ENCODE measurements at regions of chr1 and their contacts with region 1.

Region 1: DNA sequence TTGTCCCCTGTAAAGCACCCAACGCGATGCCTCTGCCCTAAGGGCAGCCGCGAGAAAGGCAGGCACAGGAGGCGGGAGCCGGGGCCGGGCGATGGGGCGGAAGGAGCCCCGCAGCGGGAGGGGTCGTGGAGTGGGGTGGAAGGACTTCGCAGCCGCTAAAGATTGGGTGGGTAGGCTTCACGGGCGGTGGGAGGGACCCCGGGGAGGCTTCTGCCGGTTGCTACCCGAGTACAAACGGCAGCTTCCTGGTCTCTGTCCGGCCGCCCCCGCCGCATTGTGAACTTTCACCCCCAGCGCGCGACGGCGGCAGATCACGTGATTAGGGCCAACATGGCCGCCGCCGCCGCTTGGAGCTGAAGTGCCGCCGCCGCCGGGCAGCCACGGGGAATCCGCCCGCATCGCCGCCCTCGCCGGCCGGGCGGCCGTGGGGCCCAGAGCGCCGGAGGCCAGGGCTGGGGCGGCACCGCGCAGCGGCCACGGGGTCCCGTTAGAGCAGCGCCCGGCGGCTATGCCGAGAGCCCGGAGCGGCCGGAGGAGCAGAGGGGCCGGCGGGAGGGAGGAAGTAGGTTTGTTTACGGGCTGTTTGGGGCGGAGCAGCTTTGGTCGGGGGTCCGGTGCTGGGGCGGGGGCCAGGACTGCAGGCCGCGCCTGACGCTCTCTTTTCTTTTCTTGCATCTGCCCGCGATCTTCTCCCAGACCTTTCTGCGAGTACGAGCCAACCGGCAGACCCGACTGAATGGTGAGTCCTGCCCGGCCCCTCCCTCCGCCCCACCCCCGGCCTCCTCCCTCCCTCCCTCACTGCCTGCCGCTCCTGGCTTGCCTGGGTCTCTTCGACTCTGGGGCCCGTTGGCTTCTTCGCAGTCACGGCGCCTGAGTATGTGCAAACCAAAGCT is 42.4 kb downstream of the TMEM53 start:
- DNase-seq: peak; percentile 80 to 92 (median 87)
- ATAC-seq: peak; percentile 87
- H3K4me3 ChIP-seq: peak overlapping the region; percentile 70
- H3K4me3 Mint-ChIP-seq: peak overlapping the region; percentile 69 to 95 (median 90)
- H3K27ac ChIP-seq: peak overlapping the region; percentile 85
- H3K27ac Mint-ChIP-seq: peak overlapping the region; percentile 46 to 99 (median 97)
- H3K4me1 ChIP-seq: peaks cover 8 to 13% of the 10 kb centered on the region in 2 donors
- H3K4me1 Mint-ChIP-seq: peaks cover 26 to 50% (median 39%) of the 10 kb centered on the region in 7 donors
- H3K27me3 ChIP-seq: no peaks in the 10 kb centered on the region
- H3K27me3 Mint-ChIP-seq: no peaks in the 10 kb centered on the region

Region 2: DNA sequence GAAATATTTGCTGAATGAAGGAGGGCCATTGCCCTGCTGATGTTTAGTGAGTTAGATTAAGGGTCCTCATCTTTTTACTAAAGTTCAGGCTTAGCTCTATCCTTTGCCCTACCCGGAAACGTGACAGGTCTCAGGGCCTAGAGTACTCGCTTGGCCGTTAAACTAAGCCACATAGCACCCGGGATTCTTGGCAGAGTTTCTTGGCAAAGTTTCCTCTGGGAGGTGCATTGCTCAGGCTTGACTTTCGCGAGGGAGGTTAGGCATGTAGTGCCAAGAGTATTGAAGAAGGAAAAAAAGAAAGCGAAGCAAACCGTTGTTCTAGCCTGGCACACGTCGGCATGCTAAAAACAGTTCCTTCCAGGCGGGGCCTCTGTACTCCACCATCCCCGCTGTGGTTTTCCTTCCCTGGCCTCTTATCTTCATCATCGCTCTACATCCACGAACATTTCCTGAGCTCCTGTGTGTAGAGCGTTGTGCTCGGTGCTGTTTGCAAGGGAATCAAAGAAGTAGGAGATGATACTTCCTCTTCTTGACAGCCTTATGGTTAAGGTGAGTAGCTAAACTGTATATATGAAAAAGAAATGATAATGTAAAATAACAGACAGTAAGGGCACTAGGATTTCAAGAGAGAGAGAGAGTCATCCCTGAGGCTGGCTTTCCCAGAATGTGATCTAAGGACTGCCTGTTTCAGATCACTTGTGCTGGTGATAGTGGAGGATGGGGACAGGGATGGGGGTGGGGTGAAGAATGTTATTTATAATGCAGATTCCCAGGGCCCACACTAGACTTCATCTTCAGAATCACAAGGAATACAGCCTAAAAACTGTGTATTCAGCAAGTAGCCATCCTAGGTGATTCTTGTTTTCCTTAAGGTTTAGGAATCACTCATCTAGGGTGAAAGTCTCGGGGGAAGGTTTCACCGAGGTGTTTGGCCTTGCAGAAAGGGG is 208.0 kb before region 1 on chr1:
- CTCF ChIA-PET with region 1: no interaction called
- POLR2A ChIA-PET with region 1: no interaction called
- intact Hi-C with region 1: no loop called
- DNase-seq: no peak
- ATAC-seq: peak; percentile 62
- H3K4me3 ChIP-seq: no peak overlapping the region
- H3K4me3 Mint-ChIP-seq: peak overlapping the region in 7 of 10 donors; percentile 2 to 79 (median 60)
- H3K27ac ChIP-seq: no peak overlapping the region
- H3K27ac Mint-ChIP-seq: no peak overlapping the region
- H3K4me1 ChIP-seq: no peaks in the 10 kb centered on the region
- H3K4me1 Mint-ChIP-seq: peaks cover 5 to 8% (median 7%) of the 10 kb centered on the region in 7 donors
- H3K27me3 ChIP-seq: peaks cover 0 to 16% of the 10 kb centered on the region in 2 donors
- H3K27me3 Mint-ChIP-seq: peaks cover 53 to 90% (median 85%) of the 10 kb centered on the region in 5 donors

Region 3: DNA sequence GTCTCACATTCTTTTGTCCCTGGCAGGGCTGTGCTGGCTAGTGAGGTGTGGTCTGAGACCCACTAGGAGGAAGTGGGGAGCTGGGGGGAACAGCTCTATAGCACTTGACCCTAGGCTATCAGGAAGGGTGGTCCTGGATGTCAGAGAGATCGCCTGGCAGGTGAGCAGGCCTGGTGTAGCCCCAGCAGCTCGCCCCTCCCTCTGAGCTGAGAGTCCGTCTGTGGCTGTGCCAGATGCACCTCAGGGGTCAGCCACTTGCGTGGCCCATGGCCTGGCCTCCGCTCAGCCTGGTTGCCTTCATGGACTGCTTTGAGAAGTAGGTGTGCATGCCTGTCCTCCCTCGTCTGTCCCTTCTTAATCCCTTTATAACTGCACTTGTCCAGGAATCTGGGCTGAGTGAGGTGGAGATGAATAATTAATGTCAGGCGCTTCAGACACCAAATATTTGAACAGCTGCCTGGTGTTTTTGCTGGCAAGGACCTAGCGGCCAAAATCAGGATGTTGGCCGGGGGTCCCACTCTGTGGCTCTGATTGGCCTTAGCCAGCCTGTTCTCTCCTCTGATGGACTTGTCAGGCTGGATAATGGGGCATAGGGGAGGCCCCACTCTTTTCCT is 11.9 kb after region 1 on chr1:
- CTCF ChIA-PET with region 1: no interaction called
- POLR2A ChIA-PET with region 1: interaction called, 18 read pairs
- intact Hi-C with region 1: no loop called
- DNase-seq: no peak
- ATAC-seq: no peak
- H3K4me3 ChIP-seq: no peak overlapping the region
- H3K4me3 Mint-ChIP-seq: no peak overlapping the region
- H3K27ac ChIP-seq: no peak overlapping the region
- H3K27ac Mint-ChIP-seq: peak overlapping the region in 3 of 9 donors; percentile 7 to 46 (median 33)
- H3K4me1 ChIP-seq: no peaks in the 10 kb centered on the region
- H3K4me1 Mint-ChIP-seq: peaks cover 0 to 13% (median 5%) of the 10 kb centered on the region in 7 donors
- H3K27me3 ChIP-seq: no peaks in the 10 kb centered on the region
- H3K27me3 Mint-ChIP-seq: no peaks in the 10 kb centered on the region

Region 4: DNA sequence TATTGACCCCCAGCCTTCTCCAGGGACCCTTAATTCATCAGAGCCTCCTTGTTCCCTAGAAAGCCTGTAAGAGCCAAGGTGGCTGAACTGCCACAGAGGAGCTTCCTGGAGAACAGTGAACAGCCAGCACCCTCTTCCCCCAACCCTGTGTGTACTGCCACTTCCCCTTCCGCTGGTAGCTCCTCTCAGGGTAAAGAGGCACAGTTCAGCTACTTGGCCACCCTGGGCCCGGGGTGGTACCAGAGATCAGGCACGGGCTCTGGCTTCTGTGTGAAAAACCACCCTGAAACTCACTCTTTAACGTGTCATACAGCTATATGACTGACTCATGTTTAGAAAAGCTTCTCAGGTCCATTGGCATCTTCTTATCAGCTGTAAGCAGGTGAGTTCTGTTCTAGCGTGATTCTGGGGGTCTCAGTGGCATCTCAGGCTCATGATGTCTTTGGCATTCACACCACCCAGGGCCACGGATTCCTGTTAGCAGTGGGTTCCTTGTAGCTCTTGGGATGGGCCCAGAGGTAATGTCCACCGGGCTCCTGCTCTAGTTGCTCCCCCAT is 65.0 kb after region 1 on chr1:
- CTCF ChIA-PET with region 1: no interaction called
- POLR2A ChIA-PET with region 1: interaction called, 10 read pairs
- intact Hi-C with region 1: no loop called
- DNase-seq: peak in 8 of 9 donors; percentile 20 to 58 (median 47)
- ATAC-seq: peak; percentile 92
- H3K4me3 ChIP-seq: no peak overlapping the region
- H3K4me3 Mint-ChIP-seq: peak overlapping the region; percentile 42 to 71 (median 62)
- H3K27ac ChIP-seq: peak overlapping the region; percentile 71
- H3K27ac Mint-ChIP-seq: peak overlapping the region; percentile 69 to 93 (median 84)
- H3K4me1 ChIP-seq: peaks cover 6 to 15% of the 10 kb centered on the region in 2 donors
- H3K4me1 Mint-ChIP-seq: peaks cover 13 to 26% (median 17%) of the 10 kb centered on the region in 7 donors
- H3K27me3 ChIP-seq: no peaks in the 10 kb centered on the region
- H3K27me3 Mint-ChIP-seq: no peaks in the 10 kb centered on the region

Measured in naive thymus-derived CD4-positive, alpha-beta T cell (primary cell).